ENCODE measurements at regions of chr13 and their contacts with region 1.

Region 1: GRCh38 chr13:98672944-98673545 is 79.4 kb downstream of the SLC15A1 start:
- DNase-seq: peak in 8 of 9 experiments; percentile 19 to 66 (median 44)
- ATAC-seq: peak; percentile 44
- H3K4me3 ChIP-seq: no peak overlapping the region
- H3K4me3 Mint-ChIP-seq: no peak overlapping the region
- H3K27ac ChIP-seq: no peak overlapping the region
- H3K27ac Mint-ChIP-seq: no peak overlapping the region
- H3K4me1 ChIP-seq: peaks cover 3% of the 10 kb centered on the region
- H3K4me1 Mint-ChIP-seq: no peaks in the 10 kb centered on the region
- H3K27me3 ChIP-seq: no peaks in the 10 kb centered on the region
- H3K27me3 Mint-ChIP-seq: no peaks in the 10 kb centered on the region
- CTCF ChIP-seq: peak; percentile 81

Region 2: GRCh38 chr13:97268772-97269171 is 1404.3 kb before region 1 on chr13:
- CTCF ChIA-PET with region 1: no interaction called
- POLR2A ChIA-PET with region 1: no interaction called
- intact Hi-C with region 1: no loop called
- DNase-seq: no peak
- ATAC-seq: no peak
- H3K4me3 ChIP-seq: no peak overlapping the region
- H3K4me3 Mint-ChIP-seq: no peak overlapping the region
- H3K27ac ChIP-seq: no peak overlapping the region
- H3K27ac Mint-ChIP-seq: no peak overlapping the region
- H3K4me1 ChIP-seq: no peaks in the 10 kb centered on the region
- H3K4me1 Mint-ChIP-seq: peaks cover 45% of the 10 kb centered on the region
- H3K27me3 ChIP-seq: no peaks in the 10 kb centered on the region
- H3K27me3 Mint-ChIP-seq: no peaks in the 10 kb centered on the region
- CTCF ChIP-seq: no peak

Region 3: DNA sequence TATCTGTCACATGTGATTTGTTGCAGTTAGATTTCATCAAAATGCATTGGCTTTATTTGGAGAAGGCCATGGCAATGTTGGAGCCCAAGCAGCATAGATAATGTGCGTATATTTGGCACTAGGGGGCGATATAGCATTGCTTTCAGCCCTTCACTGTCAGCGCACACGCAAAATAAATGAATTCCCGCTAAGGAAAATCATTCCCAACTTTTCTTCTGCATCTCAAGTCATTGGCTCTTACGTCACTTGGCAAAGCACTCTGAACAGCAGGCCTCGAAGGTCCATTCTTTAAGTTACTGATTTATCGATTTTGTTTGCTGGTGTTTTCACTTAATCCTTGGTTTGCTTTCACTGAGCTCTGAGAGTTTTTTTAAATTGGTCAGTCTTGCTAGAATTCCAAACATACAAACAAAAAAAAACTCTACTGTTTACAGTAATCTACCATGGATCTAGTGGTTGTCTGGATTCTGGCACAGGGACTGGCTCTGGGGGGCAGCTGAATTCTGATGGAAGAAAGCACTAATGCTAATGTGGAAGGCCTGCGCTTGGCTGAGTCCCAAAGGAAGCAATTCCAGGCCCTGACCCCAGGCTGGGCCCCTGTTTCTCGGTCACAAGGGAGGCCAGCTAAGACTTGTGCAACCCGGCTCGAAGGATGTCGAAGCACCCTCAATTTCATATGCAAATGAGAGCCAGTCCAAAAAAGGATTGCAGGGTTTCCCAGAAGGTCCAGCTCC is 817.3 kb before region 1 on chr13:
- CTCF ChIA-PET with region 1: interaction called, 6 read pairs
- POLR2A ChIA-PET with region 1: no interaction called
- intact Hi-C with region 1: loop called in 1 of 2 experiments (anchors 2 kb)
- DNase-seq: peak in 2 of 9 experiments; percentile 23 to 28
- ATAC-seq: no peak
- H3K4me3 ChIP-seq: no peak overlapping the region
- H3K4me3 Mint-ChIP-seq: no peak overlapping the region
- H3K27ac ChIP-seq: no peak overlapping the region
- H3K27ac Mint-ChIP-seq: no peak overlapping the region
- H3K4me1 ChIP-seq: no peaks in the 10 kb centered on the region
- H3K4me1 Mint-ChIP-seq: no peaks in the 10 kb centered on the region
- H3K27me3 ChIP-seq: no peaks in the 10 kb centered on the region
- H3K27me3 Mint-ChIP-seq: peaks cover 10% of the 10 kb centered on the region
- CTCF ChIP-seq: peak; percentile 63

Region 4: GRCh38 chr13:98349731-98350305 is 323.2 kb before region 1 on chr13:
- CTCF ChIA-PET with region 1: no interaction called
- POLR2A ChIA-PET with region 1: no interaction called
- intact Hi-C with region 1: loop called in 1 of 2 experiments (anchors 5 kb)
- DNase-seq: no peak
- ATAC-seq: no peak
- H3K4me3 ChIP-seq: no peak overlapping the region
- H3K4me3 Mint-ChIP-seq: no peak overlapping the region
- H3K27ac ChIP-seq: no peak overlapping the region
- H3K27ac Mint-ChIP-seq: no peak overlapping the region
- H3K4me1 ChIP-seq: no peaks in the 10 kb centered on the region
- H3K4me1 Mint-ChIP-seq: no peaks in the 10 kb centered on the region
- H3K27me3 ChIP-seq: no peaks in the 10 kb centered on the region
- H3K27me3 Mint-ChIP-seq: no peaks in the 10 kb centered on the region
- CTCF ChIP-seq: no peak

Region 5: DNA sequence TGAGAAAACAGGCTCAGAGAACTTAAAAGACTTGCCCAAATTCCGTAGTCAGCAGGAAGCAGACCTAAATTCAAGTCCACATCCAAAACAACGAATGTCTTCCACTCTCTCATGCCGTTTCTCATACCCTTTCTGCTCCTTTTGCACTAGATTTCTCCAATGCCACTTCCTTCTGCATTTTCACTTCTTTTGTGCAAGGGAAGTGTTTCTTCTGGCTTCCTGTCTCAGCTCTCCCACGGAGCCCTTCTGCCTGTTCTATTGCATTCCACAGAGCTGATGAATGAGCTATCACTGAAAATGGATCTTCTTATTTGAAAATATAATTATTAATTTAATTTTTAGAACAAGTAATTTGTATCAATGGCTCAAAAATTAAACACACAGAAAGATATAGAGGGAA is 40.1 kb before region 1 on chr13:
- CTCF ChIA-PET with region 1: no interaction called
- POLR2A ChIA-PET with region 1: no interaction called
- intact Hi-C with region 1: no loop called
- DNase-seq: no peak
- ATAC-seq: no peak
- H3K4me3 ChIP-seq: no peak overlapping the region
- H3K4me3 Mint-ChIP-seq: no peak overlapping the region
- H3K27ac ChIP-seq: no peak overlapping the region
- H3K27ac Mint-ChIP-seq: no peak overlapping the region
- H3K4me1 ChIP-seq: no peaks in the 10 kb centered on the region
- H3K4me1 Mint-ChIP-seq: no peaks in the 10 kb centered on the region
- H3K27me3 ChIP-seq: no peaks in the 10 kb centered on the region
- H3K27me3 Mint-ChIP-seq: peaks cover 6% of the 10 kb centered on the region
- CTCF ChIP-seq: no peak

Measured in CD8-positive, alpha-beta T cell (primary cell).